OCI-LY7 (cell line): ENCODE measurements at regions of chr3 and their contacts with region 1.

Region 1: DNA sequence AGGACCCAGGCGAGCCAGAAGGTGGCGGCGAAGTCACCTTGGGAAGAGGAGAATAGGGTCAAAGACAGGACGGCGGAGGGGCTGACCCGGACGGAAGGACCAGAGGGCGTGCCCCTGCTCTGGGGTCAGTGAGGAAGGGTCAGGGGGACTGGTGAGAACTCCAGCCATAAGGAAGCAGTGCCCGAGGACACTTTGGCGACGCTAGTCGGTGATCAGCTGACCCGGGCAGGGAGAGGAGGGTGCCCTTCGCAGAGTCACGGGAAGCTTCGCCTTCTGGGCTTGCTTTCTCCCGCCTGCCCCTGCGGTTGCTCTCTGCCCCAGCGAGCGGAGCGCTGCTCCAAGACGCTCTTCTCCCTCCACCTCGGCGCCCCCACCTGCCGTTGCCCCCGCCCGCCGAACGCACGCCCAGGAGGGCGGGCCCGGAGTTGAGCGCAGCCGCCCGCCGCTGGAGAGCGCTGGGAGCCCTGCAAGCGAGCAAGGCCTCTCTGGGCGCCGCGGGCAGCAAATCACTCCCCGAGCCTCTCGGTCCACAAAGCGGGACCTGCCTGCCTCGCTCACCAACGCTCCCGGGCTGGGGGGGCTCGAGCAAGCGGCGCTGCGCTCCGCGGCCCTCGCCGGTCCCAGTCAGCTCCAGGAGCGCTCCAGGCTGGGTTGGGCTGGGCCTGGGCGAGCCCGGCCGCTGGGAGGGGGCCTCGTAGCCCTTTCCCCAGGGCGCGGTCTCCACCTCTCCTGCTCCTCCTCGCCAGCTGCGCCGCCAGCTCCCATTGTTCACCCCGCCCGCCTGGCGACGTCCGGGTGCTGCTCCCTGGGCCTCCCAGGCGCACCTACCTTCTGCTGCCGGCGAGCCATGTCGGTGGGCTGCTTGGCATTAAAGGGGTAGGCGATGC is 1.2 kb downstream of the CADPS start:
- DNase-seq: peak; percentile 92
- H3K4me3 ChIP-seq: peak overlapping the region; percentile 91
- H3K27ac ChIP-seq: peak overlapping the region; percentile 84
- H3K4me1 ChIP-seq: peaks cover 36% of the 10 kb centered on the region
- CTCF ChIP-seq: peak; percentile 69

Region 2: GRCh38 chr3:62665598-62666437 is 208.2 kb before region 1 on chr3:
- CTCF ChIA-PET with region 1: interaction called, 25 read pairs
- POLR2A ChIA-PET with region 1: interaction called, 56 read pairs
- intact Hi-C with region 1: loop called (anchors 1 kb)
- DNase-seq: peak; percentile 90
- H3K4me3 ChIP-seq: peak overlapping the region; percentile 21
- H3K27ac ChIP-seq: peak overlapping the region; percentile 47
- H3K4me1 ChIP-seq: peaks cover 50% of the 10 kb centered on the region
- CTCF ChIP-seq: peak; percentile 97

Region 3: GRCh38 chr3:62798000-62798399 is 76.0 kb before region 1 on chr3:
- CTCF ChIA-PET with region 1: no interaction called
- POLR2A ChIA-PET with region 1: interaction called, 23 read pairs
- intact Hi-C with region 1: loop called (anchors 2 kb)
- DNase-seq: no peak
- H3K4me3 ChIP-seq: no peak overlapping the region
- H3K27ac ChIP-seq: peak overlapping the region; percentile 88
- H3K4me1 ChIP-seq: peaks cover 99% of the 10 kb centered on the region
- CTCF ChIP-seq: no peak

Region 4: GRCh38 chr3:62818347-62818746 is 55.7 kb before region 1 on chr3:
- CTCF ChIA-PET with region 1: no interaction called
- POLR2A ChIA-PET with region 1: interaction called, 77 read pairs
- intact Hi-C with region 1: no loop called
- DNase-seq: peak; percentile 96
- H3K4me3 ChIP-seq: peak overlapping the region; percentile 49
- H3K27ac ChIP-seq: peak overlapping the region; percentile 99
- H3K4me1 ChIP-seq: peaks cover 98% of the 10 kb centered on the region
- CTCF ChIP-seq: no peak

Region 5: GRCh38 chr3:62833531-62833930 is 40.5 kb before region 1 on chr3:
- CTCF ChIA-PET with region 1: interaction called, 12 read pairs
- POLR2A ChIA-PET with region 1: interaction called, 32 read pairs
- intact Hi-C with region 1: no loop called
- DNase-seq: peak; percentile 66
- H3K4me3 ChIP-seq: no peak overlapping the region
- H3K27ac ChIP-seq: no peak overlapping the region
- H3K4me1 ChIP-seq: peaks cover 85% of the 10 kb centered on the region
- CTCF ChIP-seq: peak; percentile 90

Region 6: DNA sequence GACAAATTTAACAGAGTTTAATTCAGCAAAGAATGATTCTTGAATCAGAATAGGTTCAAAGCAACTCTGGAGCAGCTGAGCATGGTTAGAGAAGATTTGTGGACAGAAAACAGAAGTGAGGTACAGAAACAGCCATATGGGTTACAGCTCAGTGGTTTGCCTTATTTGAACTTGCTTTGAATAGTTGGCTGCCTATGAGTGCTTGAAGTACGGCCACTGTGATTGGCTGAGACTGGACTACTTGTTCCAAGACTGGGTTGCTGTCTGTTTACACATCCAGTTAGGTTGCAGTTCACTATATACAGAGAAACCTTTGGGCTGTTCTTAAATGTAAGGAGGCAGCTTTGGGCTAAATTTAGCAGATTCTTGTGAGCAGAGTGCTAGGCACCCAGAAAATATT is 80.6 kb after region 1 on chr3:
- CTCF ChIA-PET with region 1: no interaction called
- POLR2A ChIA-PET with region 1: no interaction called
- intact Hi-C with region 1: loop called (anchors 5 kb)
- DNase-seq: peak; percentile 72
- H3K4me3 ChIP-seq: no peak overlapping the region
- H3K27ac ChIP-seq: peak overlapping the region; percentile 18
- H3K4me1 ChIP-seq: peaks cover 16% of the 10 kb centered on the region
- CTCF ChIP-seq: no peak